GM18951 (cell line): ENCODE measurements at regions of chr12 and their contacts with region 1.

Region 1: GRCh38 chr12:55757701-55758100 is 14.8 kb downstream of the GDF11 start:
- POLR2A ChIP-seq: no peak

Region 2: GRCh38 chr12:56029666-56030293 is 272.1 kb after region 1 on chr12:
- in situ Hi-C with region 1: loop called (anchors 10 kb)
- POLR2A ChIP-seq: no peak